K562 (cell line): ENCODE measurements at regions of chr4 and their contacts with region 1.

Region 1: GRCh38 chr4:94621491-94622080 is 136.2 kb upstream of the BMPR1B start:
- DNase-seq: peak; percentile 36 to 53 (median 48)
- ATAC-seq: peak; percentile 74
- H3K4me3 ChIP-seq: no peak overlapping the region
- H3K27ac ChIP-seq: no peak overlapping the region
- H3K4me1 ChIP-seq: no peaks in the 10 kb centered on the region
- H3K27me3 ChIP-seq: no peaks in the 10 kb centered on the region
- CTCF ChIP-seq: peak; percentile 53 to 79 (median 54); a peak in 4 of 6 replicates
- EP300 ChIP-seq: no peak
- POLR2A ChIP-seq: no peak
- RAD21 ChIP-seq: peak; percentile 64 to 68

Region 2: DNA sequence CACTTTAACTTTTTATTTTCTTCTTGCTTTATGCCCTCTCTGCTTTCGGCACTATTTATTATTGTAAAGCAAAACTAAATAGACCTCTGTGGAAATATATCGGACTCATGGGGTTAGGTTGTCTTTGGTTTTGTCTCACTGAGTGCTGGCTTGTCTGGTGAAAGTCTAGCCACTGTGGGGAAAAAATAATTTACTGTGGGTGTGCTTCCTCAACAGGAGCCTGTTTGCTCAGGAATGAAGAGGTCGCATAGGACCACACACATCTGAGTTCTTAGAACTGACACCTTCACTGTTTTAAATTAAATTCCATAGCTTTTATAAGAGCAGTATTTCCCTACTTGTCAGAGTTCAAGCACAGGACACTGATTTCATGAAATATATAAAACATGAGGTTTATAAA is 33.1 kb after region 1 on chr4:
- CTCF ChIA-PET with region 1: no interaction called
- POLR2A ChIA-PET with region 1: no interaction called
- in situ Hi-C with region 1: no loop called
- intact Hi-C with region 1: loop called (anchors 1 kb)
- DNase-seq: no peak
- ATAC-seq: no peak
- H3K4me3 ChIP-seq: no peak overlapping the region
- H3K27ac ChIP-seq: no peak overlapping the region
- H3K4me1 ChIP-seq: peaks cover 0 to 6% of the 10 kb centered on the region in 2 experiments; a peak in 4 of 5 replicates
- H3K27me3 ChIP-seq: no peaks in the 10 kb centered on the region
- CTCF ChIP-seq: no peak
- EP300 ChIP-seq: no peak
- POLR2A ChIP-seq: no peak
- RAD21 ChIP-seq: no peak

Region 3: GRCh38 chr4:94732358-94732698 is 110.7 kb after region 1 on chr4:
- CTCF ChIA-PET with region 1: no interaction called
- POLR2A ChIA-PET with region 1: no interaction called
- in situ Hi-C with region 1: no loop called
- intact Hi-C with region 1: loop called (anchors 2 kb)
- DNase-seq: no peak
- ATAC-seq: no peak
- H3K4me3 ChIP-seq: no peak overlapping the region
- H3K27ac ChIP-seq: no peak overlapping the region
- H3K4me1 ChIP-seq: no peaks in the 10 kb centered on the region
- H3K27me3 ChIP-seq: peaks cover 4% of the 10 kb centered on the region in 2 experiments; a peak in 4 of 5 replicates
- CTCF ChIP-seq: no peak
- EP300 ChIP-seq: no peak
- POLR2A ChIP-seq: no peak
- RAD21 ChIP-seq: no peak

Region 4: GRCh38 chr4:95027905-95028618 is 406.5 kb after region 1 on chr4:
- CTCF ChIA-PET with region 1: no interaction called
- POLR2A ChIA-PET with region 1: no interaction called
- in situ Hi-C with region 1: no loop called
- intact Hi-C with region 1: loop called (anchors 10 kb)
- DNase-seq: no peak
- ATAC-seq: no peak
- H3K4me3 ChIP-seq: no peak overlapping the region
- H3K27ac ChIP-seq: no peak overlapping the region
- H3K4me1 ChIP-seq: no peaks in the 10 kb centered on the region
- H3K27me3 ChIP-seq: no peaks in the 10 kb centered on the region
- CTCF ChIP-seq: no peak
- EP300 ChIP-seq: no peak
- POLR2A ChIP-seq: no peak
- RAD21 ChIP-seq: no peak

Region 5: DNA sequence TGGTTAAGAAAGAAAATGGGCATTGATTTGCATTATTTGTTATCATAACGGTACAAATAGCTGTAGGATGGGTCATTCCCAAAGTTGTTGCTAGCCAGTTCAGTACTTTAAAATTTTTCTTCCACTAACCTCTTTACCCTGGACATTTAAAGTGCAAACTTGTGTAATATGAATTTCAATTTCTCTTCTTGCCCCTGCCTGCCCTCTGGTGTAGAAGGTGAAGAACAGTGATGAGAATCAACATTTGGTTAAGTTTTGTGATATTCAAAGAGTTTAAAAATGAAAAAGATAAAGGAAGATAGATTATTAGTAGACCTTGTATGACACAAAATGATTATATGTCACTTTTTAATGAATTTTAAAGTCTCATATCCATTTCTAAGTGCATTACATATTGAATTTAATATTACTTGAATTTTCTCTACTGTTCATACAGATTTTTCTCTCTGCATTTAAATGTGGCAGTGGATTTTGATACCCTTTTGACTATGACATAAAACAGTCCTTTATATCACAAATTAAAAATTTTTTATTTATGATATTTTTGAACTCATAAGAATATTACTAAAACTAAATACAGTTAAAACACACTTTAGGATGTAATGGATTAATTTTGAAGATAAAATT is 473.9 kb after region 1 on chr4:
- CTCF ChIA-PET with region 1: interaction called, 8 read pairs
- POLR2A ChIA-PET with region 1: no interaction called
- in situ Hi-C with region 1: loop called (anchors 25 kb)
- intact Hi-C with region 1: loop called (anchors 5 kb)
- DNase-seq: peak in 2 of 4 experiments; percentile 3 to 9
- ATAC-seq: no peak
- H3K4me3 ChIP-seq: no peak overlapping the region
- H3K27ac ChIP-seq: no peak overlapping the region
- H3K4me1 ChIP-seq: no peaks in the 10 kb centered on the region
- H3K27me3 ChIP-seq: no peaks in the 10 kb centered on the region; a peak in 1 of 5 replicates
- CTCF ChIP-seq: peak; percentile 25 to 52 (median 29); a peak in 3 of 6 replicates
- EP300 ChIP-seq: no peak
- POLR2A ChIP-seq: no peak
- RAD21 ChIP-seq: peak; percentile 36 to 59